HepG2 (cell line): ENCODE measurements at regions of chr3 and their contacts with region 1.

Region 1: GRCh38 chr3:180601688-180602666 is at the start of gene TTC14:
- DNase-seq: peak; percentile 93
- ATAC-seq: peak; percentile 99
- H3K4me3 ChIP-seq: peak within 1 kb of the TSS; percentile 84 to 100 (median 89)
- H3K27ac ChIP-seq: peak within 1 kb of the TSS; percentile 88
- H3K4me1 ChIP-seq: peaks cover 18% of the 10 kb centered on the region
- H3K27me3 ChIP-seq: no peaks in the 10 kb centered on the region; a peak in 1 of 5 replicates
- CTCF ChIP-seq: peak; percentile 57
- EP300 ChIP-seq: no peak
- POLR2A ChIP-seq: peak; percentile 81 to 90
- RAD21 ChIP-seq: peak; percentile 46; the same call in 1 of the 2 replicates
- total RNA-seq, gene TTC14: 26.3 and 35.9 TPM in 2 replicates

Region 2: GRCh38 chr3:180612364-180612763 is 10.4 kb after region 1 on chr3:
- CTCF ChIA-PET with region 1: no interaction called
- POLR2A ChIA-PET with region 1: interaction called, 10 read pairs
- in situ Hi-C with region 1: no loop called
- intact Hi-C with region 1: no loop called
- DNase-seq: no peak
- ATAC-seq: peak; percentile 33; the same call in 1 of the 3 replicates
- H3K4me3 ChIP-seq: no peak overlapping the region
- H3K27ac ChIP-seq: no peak overlapping the region
- H3K4me1 ChIP-seq: no peaks in the 10 kb centered on the region
- H3K27me3 ChIP-seq: no peaks in the 10 kb centered on the region
- CTCF ChIP-seq: no peak
- EP300 ChIP-seq: no peak
- POLR2A ChIP-seq: no peak
- RAD21 ChIP-seq: no peak

Region 3: DNA sequence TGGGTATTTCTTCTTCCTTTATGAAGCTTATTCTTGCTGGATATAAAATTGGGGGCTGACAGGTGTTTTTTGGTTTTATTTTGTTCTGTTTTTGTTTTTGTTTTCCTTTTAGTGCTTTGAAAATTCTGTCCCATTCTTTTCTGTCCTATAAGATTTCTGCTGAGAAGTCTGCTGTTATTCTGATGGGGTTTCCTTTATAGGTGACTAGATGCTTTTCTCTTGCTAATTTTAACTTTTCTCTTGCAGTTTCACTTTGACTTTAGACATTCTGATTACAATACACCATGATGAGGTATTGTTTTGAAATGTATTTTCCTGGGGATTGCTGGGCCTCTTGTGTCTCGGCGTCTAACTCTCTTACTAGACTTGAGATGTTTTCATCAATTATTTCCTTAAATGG is 22.7 kb after region 1 on chr3:
- CTCF ChIA-PET with region 1: no interaction called
- POLR2A ChIA-PET with region 1: no interaction called
- in situ Hi-C with region 1: no loop called
- intact Hi-C with region 1: no loop called
- DNase-seq: no peak
- ATAC-seq: no peak
- H3K4me3 ChIP-seq: no peak overlapping the region
- H3K27ac ChIP-seq: no peak overlapping the region
- H3K4me1 ChIP-seq: no peaks in the 10 kb centered on the region
- H3K27me3 ChIP-seq: no peaks in the 10 kb centered on the region
- CTCF ChIP-seq: no peak
- EP300 ChIP-seq: no peak
- POLR2A ChIP-seq: no peak
- RAD21 ChIP-seq: no peak

Region 4: DNA sequence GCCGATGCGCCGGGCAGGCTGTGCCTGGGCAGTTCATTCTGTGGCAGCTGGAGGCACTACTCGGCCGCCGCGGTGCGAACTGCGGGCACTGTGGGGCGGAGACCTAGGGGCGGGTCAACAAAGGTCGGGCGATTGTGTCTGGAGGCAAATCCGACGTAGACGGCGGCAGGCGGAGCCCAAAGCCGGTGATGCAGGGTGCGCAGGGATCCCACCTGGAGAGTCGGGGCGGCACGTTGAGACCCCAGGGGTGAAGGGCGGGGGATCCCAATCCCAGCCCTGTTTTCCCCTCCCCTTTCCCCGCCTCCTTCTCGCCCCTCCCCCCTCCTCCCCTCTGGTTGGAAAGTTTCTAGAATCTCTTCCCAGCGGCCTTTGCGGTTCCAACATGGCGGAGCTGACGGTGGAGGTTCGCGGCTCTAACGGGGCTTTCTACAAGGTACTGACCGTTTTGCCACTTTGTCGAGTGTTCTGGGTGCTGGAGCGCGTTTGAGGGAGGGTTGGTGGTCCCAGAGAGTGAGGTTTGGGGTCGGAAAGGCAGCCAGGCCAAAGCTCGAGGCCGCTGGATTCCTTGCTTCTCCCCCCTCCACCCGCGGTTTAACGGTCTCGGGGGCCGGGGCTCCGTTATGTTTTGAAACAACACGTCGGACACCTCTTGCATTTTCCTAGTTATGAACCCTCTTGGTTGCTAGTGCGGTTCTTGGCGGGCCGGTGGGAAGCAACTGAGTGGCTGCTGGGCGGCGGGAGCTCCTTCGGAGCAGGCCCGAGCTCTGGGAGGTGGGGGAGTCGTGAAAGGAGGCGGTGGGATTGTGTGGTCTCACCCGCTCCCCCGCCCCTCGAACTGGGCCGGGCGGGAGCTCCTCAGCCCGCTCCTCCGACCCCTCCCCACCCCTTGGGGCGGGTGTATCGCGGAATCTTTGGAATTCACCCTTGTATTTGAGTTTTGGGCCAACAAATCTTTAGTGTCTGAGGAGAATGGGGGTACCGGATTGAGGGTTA is 310.6 kb after region 1 on chr3 and contains the start of gene FXR1:
- CTCF ChIA-PET with region 1: no interaction called
- POLR2A ChIA-PET with region 1: interaction called, 12 read pairs
- in situ Hi-C with region 1: no loop called
- intact Hi-C with region 1: loop called (anchors 1 kb)
- DNase-seq: peak; percentile 84
- ATAC-seq: peak; percentile 99
- H3K4me3 ChIP-seq: peak within 1 kb of the TSS; percentile 99 to 100 (median 99)
- H3K27ac ChIP-seq: peak within 1 kb of the TSS; percentile 98
- H3K4me1 ChIP-seq: peaks cover 43% of the 10 kb centered on the region
- H3K27me3 ChIP-seq: no peaks in the 10 kb centered on the region; a peak in 1 of 5 replicates
- CTCF ChIP-seq: peak; percentile 70
- EP300 ChIP-seq: peak in 1 of 2 experiments; percentile 44; a peak in 2 of 4 replicates
- POLR2A ChIP-seq: peak; percentile 79 to 92
- RAD21 ChIP-seq: peak; percentile 56; the same call in 1 of the 2 replicates
- total RNA-seq, gene FXR1: 132 and 205 TPM in 2 replicates

Region 5: DNA sequence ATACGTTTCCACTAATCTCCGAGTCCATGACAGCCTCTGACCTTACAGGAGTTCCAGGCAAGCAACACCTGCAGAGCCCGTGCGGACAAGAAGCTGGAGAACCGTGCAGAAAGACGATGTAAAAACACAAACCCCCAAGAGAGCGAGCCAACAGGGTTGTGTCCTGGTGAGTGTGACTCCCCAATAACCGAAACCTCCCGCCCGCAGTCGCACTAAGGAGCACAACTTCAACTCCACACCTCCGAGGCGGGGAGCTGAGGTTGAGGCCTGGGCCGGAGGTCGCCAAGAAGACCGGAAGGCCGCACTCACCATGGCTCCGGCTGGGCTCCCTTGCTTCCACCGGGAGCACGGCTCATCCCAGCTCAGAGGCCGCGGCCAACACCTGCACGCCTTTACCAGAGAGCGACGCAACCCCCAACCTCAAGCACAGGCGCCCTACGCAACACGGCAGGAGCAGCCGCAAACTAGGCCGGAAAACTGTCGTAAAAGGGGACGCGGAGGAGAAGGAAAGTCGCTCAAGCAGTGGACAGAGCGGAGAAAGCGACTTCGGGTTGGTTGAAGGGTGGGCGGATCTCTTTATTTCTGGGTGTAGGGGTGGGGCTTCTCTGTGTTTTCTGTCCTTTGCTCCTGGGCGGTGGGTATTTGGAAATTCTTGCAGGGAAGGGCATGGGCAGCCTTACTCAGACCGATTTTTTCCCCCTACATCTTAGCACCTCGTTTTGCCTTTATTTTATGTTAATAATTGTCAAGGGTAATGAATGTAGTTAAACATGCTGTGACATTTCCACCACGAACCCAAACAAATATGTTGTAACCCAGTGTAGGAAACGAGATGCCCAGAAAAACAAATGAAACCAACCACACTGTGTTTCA is 387.6 kb after region 1 on chr3 and contains the start of gene DNAJC19:
- CTCF ChIA-PET with region 1: no interaction called
- POLR2A ChIA-PET with region 1: interaction called, 6 read pairs
- in situ Hi-C with region 1: loop called (anchors 25 kb)
- intact Hi-C with region 1: loop called (anchors 10 kb)
- DNase-seq: peak; percentile 96
- ATAC-seq: peak; percentile 99
- H3K4me3 ChIP-seq: peak within 1 kb of the TSS; percentile 87 to 97 (median 92)
- H3K27ac ChIP-seq: peak within 1 kb of the TSS; percentile 94
- H3K4me1 ChIP-seq: peaks cover 27% of the 10 kb centered on the region
- H3K27me3 ChIP-seq: peaks cover 0 to 2% of the 10 kb centered on the region in 2 experiments; a peak in 1 of 5 replicates
- CTCF ChIP-seq: peak; percentile 29; the same call in 1 of the 2 replicates
- EP300 ChIP-seq: peak in 1 of 2 experiments; percentile 34; a peak in 2 of 4 replicates
- POLR2A ChIP-seq: peak; percentile 89 to 91
- RAD21 ChIP-seq: no peak; the same call in 1 of the 2 replicates
- total RNA-seq, gene DNAJC19: 68.8 and 75.8 TPM in 2 replicates